H1 (cell line): ENCODE measurements at regions of chr16 and their contacts with region 1.

Region 1: GRCh38 chr16:77660311-77660710 is 62.0 kb upstream of the NUDT7 start:
- DNase-seq: peak in 1 of 2 experiments; percentile 49
- H3K4me3 ChIP-seq: no peak overlapping the region
- H3K27ac ChIP-seq: no peak overlapping the region
- H3K4me1 ChIP-seq: no peaks in the 10 kb centered on the region
- H3K27me3 ChIP-seq: no peaks in the 10 kb centered on the region
- CTCF ChIP-seq: peak in 2 of 3 experiments; percentile 58 to 60; a peak in 3 of 4 replicates
- EP300 ChIP-seq: no peak
- POLR2A ChIP-seq: no peak
- RAD21 ChIP-seq: peak; percentile 66 to 73

Region 2: DNA sequence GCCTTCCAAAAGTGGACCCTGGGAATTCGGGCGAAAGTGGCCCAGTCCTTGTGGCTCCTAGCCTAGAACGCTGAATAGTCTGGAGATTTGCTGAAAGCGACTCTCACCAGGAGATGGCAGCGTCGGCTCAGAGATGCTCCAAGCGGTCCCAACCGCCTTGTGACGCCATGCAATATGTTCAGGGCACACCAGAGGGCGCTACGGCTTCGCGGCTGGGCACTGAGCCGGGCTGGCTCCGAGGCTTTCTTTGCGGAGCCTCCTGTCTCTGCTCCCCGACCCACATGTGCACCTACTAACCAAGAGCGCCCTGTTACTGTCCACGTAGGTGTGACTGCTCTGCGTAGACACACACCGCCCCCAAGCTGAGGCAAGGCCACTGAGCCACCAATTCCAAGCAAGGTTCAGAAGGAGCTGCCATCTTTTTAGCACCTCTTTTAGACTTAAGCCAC is 424.2 kb before region 1 on chr16:
- CTCF ChIA-PET with region 1: interaction called, 21 read pairs
- POLR2A ChIA-PET with region 1: no interaction called
- DNase-seq: peak; percentile 79 to 98
- H3K4me3 ChIP-seq: no peak overlapping the region
- H3K27ac ChIP-seq: no peak overlapping the region
- H3K4me1 ChIP-seq: peaks cover 0 to 11% (median 7%) of the 10 kb centered on the region in 4 experiments; a peak in 4 of 7 replicates
- H3K27me3 ChIP-seq: no peaks in the 10 kb centered on the region; a peak in 1 of 7 replicates
- CTCF ChIP-seq: peak; percentile 99 to 100 (median 100)
- EP300 ChIP-seq: peak in 1 of 2 experiments; percentile 44; a peak in 1 of 3 replicates
- POLR2A ChIP-seq: no peak
- RAD21 ChIP-seq: peak; percentile 100

Region 3: DNA sequence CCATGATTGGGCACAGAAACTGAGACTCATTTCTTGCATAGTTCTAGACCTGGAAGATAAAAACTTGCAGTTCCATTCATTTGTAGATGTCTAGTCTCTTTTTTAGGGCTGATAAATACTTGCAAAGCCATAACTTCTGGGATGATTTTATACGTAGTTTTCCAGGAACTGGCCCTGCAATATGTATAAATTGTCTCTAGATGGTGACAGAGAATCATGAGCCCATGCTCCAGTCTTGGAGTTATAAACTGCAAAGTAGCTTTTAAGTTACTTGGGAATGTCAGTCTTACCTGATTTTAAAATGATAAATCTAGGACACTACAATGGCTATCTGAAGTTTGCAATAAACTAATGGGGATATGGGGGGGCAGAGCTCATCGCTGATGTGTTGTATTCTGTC is 222.5 kb before region 1 on chr16:
- CTCF ChIA-PET with region 1: interaction called, 12 read pairs
- POLR2A ChIA-PET with region 1: no interaction called
- DNase-seq: no peak
- H3K4me3 ChIP-seq: no peak overlapping the region
- H3K27ac ChIP-seq: no peak overlapping the region
- H3K4me1 ChIP-seq: peaks cover 0 to 4% (median 3%) of the 10 kb centered on the region in 4 experiments; a peak in 5 of 7 replicates
- H3K27me3 ChIP-seq: peaks cover 12 to 40% (median 33%) of the 10 kb centered on the region in 4 experiments
- CTCF ChIP-seq: peak in 2 of 3 experiments; percentile 52 to 53; a peak in 3 of 4 replicates
- EP300 ChIP-seq: no peak
- POLR2A ChIP-seq: no peak
- RAD21 ChIP-seq: peak; percentile 78 to 81

Region 4: DNA sequence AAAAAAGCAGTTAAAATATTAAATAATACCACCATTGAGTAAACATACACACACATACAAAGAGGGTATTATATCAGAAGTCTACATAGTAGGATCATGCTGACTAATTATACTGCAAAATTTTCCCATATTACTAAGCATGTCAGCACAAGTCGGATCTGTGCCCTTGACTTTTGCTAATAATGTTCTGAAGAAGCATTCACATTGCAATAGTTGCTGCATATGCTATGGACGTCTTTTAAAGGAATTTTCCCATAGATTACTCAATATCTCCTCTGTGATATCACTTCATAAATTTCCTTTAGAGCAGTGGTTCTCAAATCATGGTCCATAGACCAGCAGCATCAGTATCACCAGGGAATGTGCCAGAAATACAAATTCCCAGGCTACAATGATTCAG is 48.9 kb before region 1 on chr16:
- CTCF ChIA-PET with region 1: no interaction called
- POLR2A ChIA-PET with region 1: no interaction called
- DNase-seq: no peak
- H3K4me3 ChIP-seq: no peak overlapping the region
- H3K27ac ChIP-seq: no peak overlapping the region
- H3K4me1 ChIP-seq: no peaks in the 10 kb centered on the region
- H3K27me3 ChIP-seq: no peaks in the 10 kb centered on the region
- CTCF ChIP-seq: no peak
- EP300 ChIP-seq: no peak
- POLR2A ChIP-seq: no peak
- RAD21 ChIP-seq: no peak

Region 5: DNA sequence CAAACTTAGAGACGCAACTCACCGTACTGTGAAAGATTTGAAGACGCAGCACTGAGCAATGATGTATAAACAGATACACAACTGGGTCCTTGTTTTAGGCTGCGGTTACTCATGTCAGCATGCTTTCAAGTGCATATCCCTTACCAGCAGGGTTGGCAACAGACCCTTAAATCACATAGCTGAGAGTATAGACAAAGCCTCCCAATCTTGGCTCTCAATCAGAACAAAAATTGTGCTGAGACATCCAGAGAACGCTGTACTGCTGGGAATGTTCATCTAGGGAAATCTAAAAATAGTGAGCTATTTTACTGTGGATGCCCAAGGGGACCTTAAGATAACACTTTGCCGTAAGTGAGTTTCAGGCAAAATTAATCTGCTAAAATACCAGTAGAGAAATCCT is 22.4 kb before region 1 on chr16:
- CTCF ChIA-PET with region 1: interaction called, 14 read pairs
- POLR2A ChIA-PET with region 1: no interaction called
- DNase-seq: no peak
- H3K4me3 ChIP-seq: no peak overlapping the region
- H3K27ac ChIP-seq: no peak overlapping the region
- H3K4me1 ChIP-seq: no peaks in the 10 kb centered on the region
- H3K27me3 ChIP-seq: no peaks in the 10 kb centered on the region
- CTCF ChIP-seq: no peak
- EP300 ChIP-seq: no peak
- POLR2A ChIP-seq: no peak
- RAD21 ChIP-seq: no peak

Region 6: GRCh38 chr16:77675464-77676324 is 15.4 kb after region 1 on chr16:
- CTCF ChIA-PET with region 1: interaction called, 11 read pairs
- POLR2A ChIA-PET with region 1: no interaction called
- DNase-seq: peak; percentile 29 to 87
- H3K4me3 ChIP-seq: no peak overlapping the region
- H3K27ac ChIP-seq: no peak overlapping the region
- H3K4me1 ChIP-seq: no peaks in the 10 kb centered on the region; a peak in 1 of 7 replicates
- H3K27me3 ChIP-seq: peaks cover 0 to 1% (median 0%) of the 10 kb centered on the region in 4 experiments; a peak in 1 of 7 replicates
- CTCF ChIP-seq: peak; percentile 44 to 95 (median 91)
- EP300 ChIP-seq: no peak
- POLR2A ChIP-seq: no peak
- RAD21 ChIP-seq: peak; percentile 99 to 100

Region 7: GRCh38 chr16:77690416-77690815 is 30.1 kb after region 1 on chr16:
- CTCF ChIA-PET with region 1: no interaction called
- POLR2A ChIA-PET with region 1: no interaction called
- DNase-seq: no peak
- H3K4me3 ChIP-seq: no peak overlapping the region
- H3K27ac ChIP-seq: no peak overlapping the region
- H3K4me1 ChIP-seq: no peaks in the 10 kb centered on the region
- H3K27me3 ChIP-seq: 0 out of 7 replicates have a peak, but pooled peaks cover 0 to 1% (median 0%) of the 10 kb centered on the region in 4 experiments
- CTCF ChIP-seq: no peak
- EP300 ChIP-seq: no peak
- POLR2A ChIP-seq: no peak
- RAD21 ChIP-seq: no peak